ENCODE measurements at regions of chr1 and their contacts with region 1.

Region 1: DNA sequence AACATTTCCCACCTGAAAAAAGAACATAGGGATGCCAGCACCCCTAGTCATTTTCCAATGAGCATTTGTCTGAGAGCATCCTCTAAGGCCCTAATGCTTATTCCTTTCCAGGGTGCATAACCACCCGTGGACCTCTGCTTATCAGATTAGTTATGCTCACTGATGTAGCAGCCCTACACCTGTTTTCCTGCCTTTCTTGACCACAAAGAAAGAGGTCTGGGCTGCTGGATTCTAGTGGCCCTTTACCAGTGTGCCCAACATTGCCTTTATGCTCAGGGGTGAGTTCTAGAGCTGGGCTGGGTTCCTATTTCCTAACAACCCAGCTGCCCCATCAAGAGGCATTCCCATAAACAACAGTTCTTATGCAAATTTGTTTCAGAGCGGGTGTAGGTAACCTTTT is 20.3 kb upstream of the PM20D1 start:
- DNase-seq: no peak
- H3K4me3 ChIP-seq: no peak overlapping the region
- H3K27ac ChIP-seq: no peak overlapping the region
- H3K4me1 ChIP-seq: no peaks in the 10 kb centered on the region
- H3K27me3 ChIP-seq: no peaks in the 10 kb centered on the region; the same call in 1 of the 2 replicates
- CTCF ChIP-seq: no peak

Region 2: GRCh38 chr1:205803986-205804385 is 66.2 kb before region 1 on chr1:
- CTCF ChIA-PET with region 1: no interaction called
- POLR2A ChIA-PET with region 1: interaction called, 26 read pairs
- intact Hi-C with region 1: no loop called
- DNase-seq: no peak
- H3K4me3 ChIP-seq: no peak overlapping the region
- H3K27ac ChIP-seq: no peak overlapping the region
- H3K4me1 ChIP-seq: no peaks in the 10 kb centered on the region
- H3K27me3 ChIP-seq: no peaks in the 10 kb centered on the region
- CTCF ChIP-seq: no peak

Region 3: GRCh38 chr1:206030714-206031113 is 160.5 kb after region 1 on chr1:
- CTCF ChIA-PET with region 1: no interaction called
- POLR2A ChIA-PET with region 1: no interaction called
- intact Hi-C with region 1: no loop called
- DNase-seq: peak; percentile 72 to 79
- H3K4me3 ChIP-seq: no peak overlapping the region
- H3K27ac ChIP-seq: no peak overlapping the region
- H3K4me1 ChIP-seq: peaks cover 5% of the 10 kb centered on the region; the same call in 1 of the 2 replicates
- H3K27me3 ChIP-seq: no peaks in the 10 kb centered on the region
- CTCF ChIP-seq: peak; percentile 84